Panc1 (cell line): ENCODE measurements at regions of chr20 and their contacts with region 1.

Region 1: DNA sequence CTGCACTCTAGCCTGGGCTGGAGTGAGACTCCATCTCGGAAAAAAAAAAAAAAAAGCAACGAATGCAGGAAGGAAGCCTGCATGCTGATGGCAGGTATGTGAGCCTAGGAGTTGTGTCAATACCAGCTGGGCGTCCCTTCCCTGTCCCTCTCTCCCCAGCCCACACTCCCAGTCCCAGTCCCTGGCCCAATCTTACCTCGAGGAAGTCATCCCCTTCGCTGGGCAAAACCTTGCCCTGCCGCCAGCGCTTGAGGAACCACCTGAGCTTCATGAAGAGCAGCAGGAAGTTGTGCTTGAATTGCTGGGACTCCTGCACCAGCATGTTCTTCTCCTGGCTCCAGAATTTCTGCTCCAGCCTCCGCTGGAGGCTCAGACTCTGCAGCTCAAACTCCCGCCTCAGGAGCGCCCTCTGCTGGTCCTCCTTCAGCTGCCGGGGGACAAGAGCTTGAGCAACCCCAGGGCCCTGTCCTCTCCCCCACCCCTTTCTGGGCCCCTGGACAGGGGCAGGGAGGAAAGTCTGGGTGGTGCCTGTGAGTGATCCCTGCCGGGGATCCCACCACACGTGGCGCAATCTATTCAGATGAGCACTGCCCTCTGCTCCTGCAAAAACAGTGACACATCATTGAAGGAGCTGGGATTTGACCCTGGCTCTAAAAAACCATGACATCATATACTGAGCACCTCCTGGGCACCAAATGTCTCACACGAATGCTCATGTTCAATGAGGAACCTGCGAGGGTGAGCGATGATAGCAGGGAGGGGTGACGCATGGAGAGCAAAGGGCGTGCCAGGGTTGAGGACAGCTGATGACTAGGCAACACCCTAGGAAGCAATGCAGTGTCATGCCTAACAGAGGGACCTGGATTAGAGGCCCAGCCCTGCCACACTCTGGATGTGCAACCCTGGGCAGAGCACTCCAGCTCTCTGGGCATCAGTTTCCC is 35.0 kb upstream of the DSN1 start:
- DNase-seq: no peak
- ATAC-seq: peak; percentile 80
- H3K4me3 ChIP-seq: no peak overlapping the region
- H3K27ac ChIP-seq: no peak overlapping the region
- H3K4me1 ChIP-seq: no peaks in the 10 kb centered on the region
- H3K27me3 ChIP-seq: no peaks in the 10 kb centered on the region
- CTCF ChIP-seq: peak; percentile 96

Region 2: DNA sequence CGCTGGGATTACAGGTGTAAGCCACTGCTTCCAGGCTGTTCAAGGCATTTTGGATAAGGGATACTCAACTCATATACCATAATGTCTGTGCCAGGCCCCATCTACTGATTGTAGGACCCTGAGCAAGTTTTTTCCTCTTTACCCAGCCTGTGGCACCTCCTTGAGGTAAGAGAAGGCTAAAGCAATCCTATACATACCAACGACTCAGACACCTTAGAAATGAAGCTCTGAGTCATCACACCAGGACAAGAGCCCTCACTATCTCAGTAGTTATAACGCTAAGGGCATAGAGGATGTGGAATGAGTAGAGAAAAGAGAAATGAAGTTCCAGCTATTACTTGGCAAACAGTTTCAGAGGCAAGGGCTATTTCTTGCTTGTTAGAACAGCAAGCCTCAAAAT is 79.6 kb before region 1 on chr20:
- CTCF ChIA-PET with region 1: interaction called, 12 read pairs
- POLR2A ChIA-PET with region 1: no interaction called
- in situ Hi-C with region 1: no loop called
- intact Hi-C with region 1: no loop called
- DNase-seq: no peak
- ATAC-seq: peak; percentile 72; the same call in 1 of the 2 replicates
- H3K4me3 ChIP-seq: no peak overlapping the region
- H3K27ac ChIP-seq: no peak overlapping the region
- H3K4me1 ChIP-seq: no peaks in the 10 kb centered on the region
- H3K27me3 ChIP-seq: no peaks in the 10 kb centered on the region
- CTCF ChIP-seq: no peak